BJ (cell line): ENCODE measurements at regions of chr12 and their contacts with region 1.

Region 1: GRCh38 chr12:91109148-91109564 is 2.1 kb downstream of the LUM start:
- DNase-seq: peak; percentile 58
- H3K4me3 ChIP-seq: peak overlapping the region; percentile 46
- H3K27me3 ChIP-seq: no peaks in the 10 kb centered on the region
- CTCF ChIP-seq: peak; percentile 79

Region 2: DNA sequence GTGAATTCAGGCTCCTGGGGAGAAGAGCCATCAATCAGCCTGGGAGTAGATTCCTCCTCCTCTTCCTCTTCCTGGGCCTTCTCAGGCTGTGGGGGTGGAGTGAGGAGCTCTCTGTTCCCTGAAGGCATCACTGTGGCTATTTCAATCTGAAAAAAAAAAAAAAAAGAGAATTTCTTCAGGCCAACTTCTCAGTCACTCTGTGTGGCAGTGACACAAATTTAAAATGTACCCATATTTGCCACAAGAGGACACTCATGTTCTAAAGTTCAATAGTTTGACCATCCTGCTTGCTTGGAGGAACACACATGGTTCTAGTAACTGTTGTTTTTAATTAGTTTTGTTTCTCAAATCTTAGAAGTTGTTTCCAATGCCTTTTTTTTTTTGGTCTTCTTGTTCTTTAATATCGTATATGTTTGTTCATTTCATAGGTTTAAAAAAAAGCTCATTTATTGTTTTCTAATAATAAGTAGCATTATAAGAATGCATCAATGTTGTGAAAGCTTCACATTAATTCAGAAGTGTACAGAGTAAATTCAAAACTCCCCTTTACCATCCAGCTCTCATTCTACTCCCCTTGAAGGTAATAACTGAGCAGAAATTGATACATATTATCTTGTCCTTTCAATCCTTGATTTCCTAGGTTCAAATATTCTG is 130.9 kb before region 1 on chr12:
- CTCF ChIA-PET with region 1: interaction called, 51 read pairs
- POLR2A ChIA-PET with region 1: interaction called, 8 read pairs
- DNase-seq: peak; percentile 46
- H3K4me3 ChIP-seq: no peak overlapping the region
- H3K27me3 ChIP-seq: no peaks in the 10 kb centered on the region
- CTCF ChIP-seq: peak; percentile 75

Region 3: DNA sequence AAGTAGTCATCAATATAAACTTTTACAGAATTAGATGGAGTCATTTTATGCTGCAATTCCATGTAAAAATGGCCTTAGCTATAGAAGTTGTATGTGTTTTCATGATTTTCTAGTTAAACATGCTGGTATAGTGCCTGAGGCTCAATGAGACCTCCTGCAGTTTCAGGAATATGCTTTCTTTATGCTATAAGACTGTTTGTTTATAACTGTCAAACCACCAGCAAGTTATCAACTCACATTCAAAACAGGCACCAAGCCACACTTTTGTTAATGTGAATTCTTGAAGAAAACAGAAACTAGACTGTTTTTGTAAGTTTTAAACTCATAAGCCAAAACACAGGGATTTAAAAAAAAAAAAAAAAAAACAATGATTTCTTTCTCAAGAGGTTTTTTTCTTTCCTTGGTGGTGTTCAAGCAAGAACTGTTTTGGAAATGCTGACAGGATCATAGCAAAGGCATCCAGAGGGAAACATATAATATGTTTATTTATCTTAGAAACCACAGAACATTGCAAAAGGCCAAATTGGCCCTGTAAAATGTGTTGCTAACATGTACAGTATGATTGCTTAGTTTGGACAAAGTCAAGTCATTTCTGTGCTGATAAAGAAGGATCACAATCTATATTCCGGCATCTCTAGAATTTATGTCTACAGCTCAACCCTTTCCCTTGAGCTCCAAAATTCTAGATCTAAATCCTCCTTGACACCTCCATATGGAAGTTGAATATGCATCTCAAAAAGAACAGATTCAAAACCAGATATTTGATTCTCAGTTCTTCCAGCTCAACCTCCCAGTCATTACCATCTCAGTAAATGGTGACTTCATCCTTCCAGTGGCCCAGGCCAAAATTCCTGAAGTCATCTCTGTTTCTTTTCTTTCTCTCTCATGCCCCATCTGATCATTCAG is 31.1 kb after region 1 on chr12:
- CTCF ChIA-PET with region 1: interaction called, 21 read pairs
- POLR2A ChIA-PET with region 1: interaction called, 3 read pairs
- DNase-seq: peak; percentile 97
- H3K4me3 ChIP-seq: no peak overlapping the region
- H3K27me3 ChIP-seq: no peaks in the 10 kb centered on the region
- CTCF ChIP-seq: no peak

Region 4: GRCh38 chr12:91326058-91327027 is 217.2 kb after region 1 on chr12:
- CTCF ChIA-PET with region 1: interaction called, 13 read pairs
- POLR2A ChIA-PET with region 1: no interaction called
- DNase-seq: no peak
- H3K4me3 ChIP-seq: no peak overlapping the region
- H3K27me3 ChIP-seq: no peaks in the 10 kb centered on the region
- CTCF ChIP-seq: peak; percentile 73